ENCODE measurements at regions of chr3 and their contacts with region 1.

Region 1: GRCh38 chr3:149717391-149718056 is 34.8 kb downstream of the COMMD2 start:
- DNase-seq: peak; percentile 48
- H3K4me3 ChIP-seq: no peak overlapping the region
- H3K27ac ChIP-seq: no peak overlapping the region
- H3K4me1 ChIP-seq: no peaks in the 10 kb centered on the region
- H3K27me3 ChIP-seq: no peaks in the 10 kb centered on the region
- CTCF ChIP-seq: peak; percentile 62

Region 2: GRCh38 chr3:149512209-149512782 is 205.2 kb before region 1 on chr3:
- intact Hi-C with region 1: loop called (anchors 2 kb)
- DNase-seq: peak; percentile 60
- H3K4me3 ChIP-seq: no peak overlapping the region
- H3K27ac ChIP-seq: no peak overlapping the region
- H3K4me1 ChIP-seq: no peaks in the 10 kb centered on the region
- H3K27me3 ChIP-seq: no peaks in the 10 kb centered on the region
- CTCF ChIP-seq: peak; percentile 78

Region 3: DNA sequence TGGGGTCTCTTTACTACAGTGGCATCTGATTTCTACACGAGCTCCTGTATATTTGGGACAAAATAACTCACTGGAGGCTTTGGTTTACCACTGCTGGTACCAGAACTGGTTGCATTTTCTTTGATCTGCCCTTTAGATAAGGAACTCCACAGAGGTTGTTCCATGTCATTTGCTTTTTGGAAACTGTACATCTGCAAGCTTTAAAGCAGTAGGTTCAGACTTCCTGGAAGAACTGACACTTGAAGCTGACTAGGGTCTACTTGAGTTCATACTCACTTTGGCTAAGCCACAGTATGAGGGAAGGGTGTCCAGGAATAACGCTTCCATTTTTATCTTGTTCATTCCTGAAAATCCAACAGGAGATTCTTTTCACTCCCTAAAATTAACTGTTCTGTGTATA is 146.1 kb before region 1 on chr3:
- intact Hi-C with region 1: loop called (anchors 2 kb)
- DNase-seq: no peak
- H3K4me3 ChIP-seq: no peak overlapping the region
- H3K27ac ChIP-seq: no peak overlapping the region
- H3K4me1 ChIP-seq: no peaks in the 10 kb centered on the region
- H3K27me3 ChIP-seq: no peaks in the 10 kb centered on the region
- CTCF ChIP-seq: no peak